Ascending aorta (tissue), 2 donors: ENCODE measurements at regions of chr1 and their contacts with region 1.

Region 1: GRCh38 chr1:80457409-80457808 is 1343.3 kb upstream of the ADGRL2 start:
- DNase-seq: no peak
- H3K4me3 ChIP-seq: no peak overlapping the region
- H3K27ac ChIP-seq: no peak overlapping the region
- H3K4me1 ChIP-seq: no peaks in the 10 kb centered on the region
- H3K27me3 ChIP-seq: no peaks in the 10 kb centered on the region
- CTCF ChIP-seq: no peak

Region 2: GRCh38 chr1:79704067-79704466 is 753.3 kb before region 1 on chr1:
- intact Hi-C with region 1: loop called (anchors 5 kb)
- DNase-seq: no peak
- H3K4me3 ChIP-seq: no peak overlapping the region
- H3K27ac ChIP-seq: no peak overlapping the region
- H3K4me1 ChIP-seq: no peaks in the 10 kb centered on the region
- H3K27me3 ChIP-seq: no peaks in the 10 kb centered on the region
- CTCF ChIP-seq: no peak

Region 3: DNA sequence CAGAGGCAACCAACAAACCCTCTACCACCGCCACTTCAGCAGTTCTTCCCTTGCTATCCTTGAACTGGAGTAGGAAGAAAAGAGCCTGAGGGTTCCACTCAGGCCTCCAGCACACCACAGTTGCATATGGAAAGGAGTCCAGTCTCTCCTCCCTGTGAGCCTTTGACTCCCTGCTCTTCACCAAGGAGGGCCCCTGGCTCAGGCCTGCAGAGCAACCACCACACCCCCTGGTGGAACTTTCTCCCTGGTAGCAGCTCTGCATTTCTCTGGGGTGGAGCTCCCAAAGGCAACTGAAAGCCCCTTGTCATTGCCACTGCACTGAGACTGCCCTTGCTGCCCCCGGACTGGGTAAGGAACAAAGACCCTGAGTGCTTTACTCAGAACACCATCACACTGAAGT is 321.9 kb after region 1 on chr1:
- intact Hi-C with region 1: no loop called
- DNase-seq: no peak
- H3K4me3 ChIP-seq: no peak overlapping the region
- H3K27ac ChIP-seq: no peak overlapping the region
- H3K4me1 ChIP-seq: no peaks in the 10 kb centered on the region
- H3K27me3 ChIP-seq: no peaks in the 10 kb centered on the region
- CTCF ChIP-seq: no peak